BJ (cell line): ENCODE measurements at regions of chr13 and their contacts with region 1.

Region 1: GRCh38 chr13:113208424-113209335 is at the start of gene PCID2:
- DNase-seq: no peak
- H3K4me3 ChIP-seq: peak within 1 kb of the TSS; percentile 77
- H3K27me3 ChIP-seq: no peaks in the 10 kb centered on the region
- CTCF ChIP-seq: no peak
- polyA plus RNA-seq, gene PCID2: 73.6 and 87.5 TPM in 2 replicates

Region 2: GRCh38 chr13:113159701-113160100 is 49.0 kb before region 1 on chr13:
- CTCF ChIA-PET with region 1: no interaction called
- POLR2A ChIA-PET with region 1: interaction called, 14 read pairs
- DNase-seq: no peak
- H3K4me3 ChIP-seq: no peak overlapping the region
- H3K27me3 ChIP-seq: no peaks in the 10 kb centered on the region
- CTCF ChIP-seq: no peak

Region 3: DNA sequence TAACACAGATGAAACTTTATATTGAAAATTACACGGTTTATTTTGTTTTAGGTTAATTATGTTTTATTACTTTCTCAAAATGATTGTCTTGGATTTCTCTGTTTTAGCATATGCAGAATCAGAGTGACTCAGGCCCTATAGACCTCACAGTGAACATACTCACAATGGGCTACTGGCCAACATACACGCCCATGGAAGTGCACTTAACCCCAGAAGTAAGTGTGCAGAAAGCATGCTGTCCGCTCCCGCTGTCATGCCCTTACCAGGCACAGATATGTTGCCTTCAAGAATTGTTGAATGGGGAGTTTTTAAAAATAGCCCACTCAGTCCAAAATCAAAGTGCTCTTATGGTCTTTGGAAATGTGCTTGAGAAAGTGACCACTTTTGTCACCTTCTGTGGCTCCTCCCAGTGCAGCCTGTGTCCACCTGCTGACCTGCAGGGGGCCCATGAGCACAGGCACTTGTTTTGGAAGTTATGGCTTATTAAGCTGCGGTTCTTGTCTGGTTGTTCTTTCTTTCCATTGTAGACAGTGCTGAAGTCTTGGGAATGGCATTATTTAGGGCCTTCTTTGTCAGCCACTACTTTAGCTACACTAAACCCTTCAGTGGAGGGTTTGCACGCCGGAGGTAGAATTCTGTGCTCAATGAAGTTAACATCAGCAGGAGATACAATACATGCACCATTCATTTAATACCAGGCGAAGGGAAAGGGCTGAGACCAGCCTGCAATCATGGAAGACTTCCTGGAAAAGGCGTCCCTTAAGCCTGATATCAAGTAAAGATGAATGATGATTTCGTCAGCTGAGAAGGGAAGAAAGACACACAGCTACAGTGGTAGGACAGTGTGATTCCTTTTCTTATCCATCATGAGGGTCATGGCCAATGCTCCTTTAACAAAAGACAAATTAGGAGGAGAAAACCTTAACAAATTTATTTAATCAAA is 37.4 kb after region 1 on chr13:
- CTCF ChIA-PET with region 1: no interaction called
- POLR2A ChIA-PET with region 1: no interaction called
- DNase-seq: no peak
- H3K4me3 ChIP-seq: no peak overlapping the region
- H3K27me3 ChIP-seq: no peaks in the 10 kb centered on the region
- CTCF ChIP-seq: peak; percentile 44